Natural killer cell (primary cell): ENCODE measurements at regions of chr20 and their contacts with region 1.

Region 1: GRCh38 chr20:51076786-51077685 is 54.1 kb upstream of the KCNG1 start:
- DNase-seq: no peak
- ATAC-seq: no peak
- H3K4me3 ChIP-seq: no peak overlapping the region
- H3K4me3 Mint-ChIP-seq: no peak overlapping the region
- H3K27ac ChIP-seq: no peak overlapping the region
- H3K27ac Mint-ChIP-seq: no peak overlapping the region
- H3K4me1 ChIP-seq: no peaks in the 10 kb centered on the region
- H3K4me1 Mint-ChIP-seq: no peaks in the 10 kb centered on the region
- H3K27me3 ChIP-seq: no peaks in the 10 kb centered on the region
- H3K27me3 Mint-ChIP-seq: peaks cover 26 to 67% of the 10 kb centered on the region in 2 donors
- CTCF ChIP-seq: no peak

Region 2: DNA sequence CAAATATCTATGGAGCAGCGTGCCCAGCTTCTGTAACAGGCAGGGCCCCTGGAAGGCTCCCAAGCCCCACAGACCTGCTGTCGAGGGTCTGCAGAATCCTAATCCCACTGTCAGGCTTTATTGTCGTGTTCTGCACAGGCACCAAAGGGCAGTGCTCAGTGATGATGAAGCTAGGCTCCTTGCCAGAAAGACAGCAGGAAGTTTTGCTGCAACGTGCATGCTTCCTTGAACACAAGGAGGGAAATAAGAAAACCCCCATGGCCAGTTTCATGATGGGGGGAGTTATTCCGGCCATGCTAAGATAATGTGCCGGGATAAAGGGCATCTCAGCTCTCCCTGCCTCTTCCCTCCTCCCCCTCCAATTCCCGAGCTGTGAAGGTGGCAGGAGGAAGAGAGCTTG is 55.2 kb after region 1 on chr20:
- intact Hi-C with region 1: loop called (anchors 10 kb)
- DNase-seq: no peak
- ATAC-seq: no peak
- H3K4me3 ChIP-seq: no peak overlapping the region
- H3K4me3 Mint-ChIP-seq: no peak overlapping the region
- H3K27ac ChIP-seq: no peak overlapping the region
- H3K27ac Mint-ChIP-seq: no peak overlapping the region
- H3K4me1 ChIP-seq: peaks cover 8% of the 10 kb centered on the region
- H3K4me1 Mint-ChIP-seq: peaks cover 12 to 22% of the 10 kb centered on the region in 2 donors
- H3K27me3 ChIP-seq: no peaks in the 10 kb centered on the region
- H3K27me3 Mint-ChIP-seq: peaks cover 0 to 3% of the 10 kb centered on the region in 2 donors
- CTCF ChIP-seq: no peak